ENCODE measurements at regions of chr1 and their contacts with region 1.

Region 1: DNA sequence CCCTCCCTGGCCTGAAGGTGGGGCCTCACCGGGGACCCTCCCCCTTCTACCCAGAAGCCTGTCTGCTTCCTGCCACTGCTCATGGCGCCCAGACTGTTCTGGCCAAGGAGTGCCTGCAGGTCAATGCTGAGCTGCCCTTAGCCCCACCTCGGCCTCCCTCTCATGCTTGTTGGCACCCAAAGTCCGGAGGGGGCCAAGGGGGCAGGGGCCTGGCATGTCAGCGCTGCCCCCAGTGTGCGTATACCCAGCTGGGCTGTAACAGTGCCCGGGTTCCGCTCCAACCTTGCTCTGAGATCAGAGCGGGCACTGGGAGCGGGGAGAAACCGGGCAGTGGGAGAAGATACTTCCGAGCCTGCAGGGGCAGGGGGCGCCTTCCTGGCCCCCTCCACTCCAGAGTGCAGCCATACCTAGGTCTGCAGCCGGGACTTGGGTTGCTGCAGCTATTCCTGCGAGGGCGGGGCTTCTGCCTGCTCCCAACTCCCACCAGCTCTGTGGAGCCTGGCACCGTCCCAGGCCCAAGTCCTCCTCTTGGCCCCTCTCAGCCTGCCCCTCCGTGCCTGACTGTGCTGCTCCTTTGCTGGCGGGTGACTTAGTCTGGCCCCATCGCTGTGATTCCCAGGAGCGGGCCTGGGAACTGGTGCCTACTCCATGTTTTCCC is 21.4 kb upstream of the TGFB2 start:
- DNase-seq: peak in 1 of 2 donors; percentile 46
- ATAC-seq: peak; percentile 21
- H3K4me3 ChIP-seq: no peak overlapping the region
- H3K27ac ChIP-seq: no peak overlapping the region
- H3K4me1 ChIP-seq: no peaks in the 10 kb centered on the region
- H3K27me3 ChIP-seq: no peaks in the 10 kb centered on the region

Region 2: GRCh38 chr1:218339267-218339831 is 15.7 kb after region 1 on chr1:
- intact Hi-C with region 1: no loop called
- DNase-seq: no peak
- ATAC-seq: no peak
- H3K4me3 ChIP-seq: no peak overlapping the region
- H3K27ac ChIP-seq: no peak overlapping the region
- H3K4me1 ChIP-seq: no peaks in the 10 kb centered on the region
- H3K27me3 ChIP-seq: no peaks in the 10 kb centered on the region

Region 3: GRCh38 chr1:218384581-218384993 is 60.9 kb after region 1 on chr1:
- intact Hi-C with region 1: no loop called
- DNase-seq: no peak
- ATAC-seq: no peak
- H3K4me3 ChIP-seq: no peak overlapping the region
- H3K27ac ChIP-seq: no peak overlapping the region
- H3K4me1 ChIP-seq: peaks cover 0 to 10% of the 10 kb centered on the region in 2 donors
- H3K27me3 ChIP-seq: no peaks in the 10 kb centered on the region

Region 4: DNA sequence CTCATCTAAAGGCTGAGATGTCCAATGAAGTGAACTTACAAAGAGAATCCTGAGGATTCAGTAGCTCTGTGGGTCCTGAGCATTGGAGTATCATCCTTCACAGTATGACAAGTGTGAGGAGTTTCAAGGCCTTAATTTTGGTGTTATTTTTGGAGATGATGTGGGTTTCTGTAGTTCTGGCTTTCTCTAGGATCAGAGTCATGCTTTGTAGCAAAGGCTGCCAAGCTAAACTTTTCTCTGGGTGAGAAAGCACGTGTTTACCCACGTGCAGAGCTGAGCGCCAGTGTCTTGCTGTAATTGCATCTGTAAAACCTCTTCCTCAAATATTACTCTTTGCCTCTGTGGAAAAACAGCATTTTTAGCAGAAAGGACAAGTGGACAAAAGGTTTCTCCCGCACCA is 462.2 kb after region 1 on chr1:
- intact Hi-C with region 1: no loop called
- DNase-seq: peak; percentile 56 to 72
- ATAC-seq: peak; percentile 68
- H3K4me3 ChIP-seq: no peak overlapping the region
- H3K27ac ChIP-seq: no peak overlapping the region
- H3K4me1 ChIP-seq: no peaks in the 10 kb centered on the region
- H3K27me3 ChIP-seq: no peaks in the 10 kb centered on the region

Region 5: DNA sequence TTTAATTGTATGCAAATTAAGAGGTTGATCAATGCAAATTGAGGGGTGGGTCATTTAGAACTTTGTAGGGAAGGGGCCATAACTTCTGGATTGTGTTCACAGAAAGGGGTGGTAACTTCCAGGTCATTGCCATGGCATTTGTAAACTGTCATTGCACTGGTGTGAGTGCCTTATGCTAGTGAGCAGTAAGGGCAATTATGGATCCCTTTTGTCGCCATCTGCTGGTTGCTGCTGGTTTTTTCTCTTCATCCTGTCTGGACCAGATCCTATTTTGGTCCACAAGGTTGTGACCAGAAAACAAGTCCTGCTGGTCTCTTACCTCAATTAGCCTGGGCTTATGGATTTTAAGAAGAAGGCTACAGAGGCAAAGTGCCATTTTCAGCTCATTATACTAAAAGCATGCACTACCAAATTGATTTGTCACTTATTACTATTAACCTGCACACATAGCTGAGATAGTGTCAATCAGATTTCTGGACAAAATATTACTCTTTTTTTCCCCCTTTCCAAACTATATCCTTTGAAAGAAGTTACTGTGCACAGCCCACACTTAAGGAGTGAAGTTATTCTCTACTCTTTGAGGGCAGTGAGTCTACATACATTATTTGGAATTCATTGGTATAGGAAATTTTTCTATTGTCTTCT is 1093.0 kb after region 1 on chr1:
- intact Hi-C with region 1: loop called in 1 of 2 experiments (anchors 10 kb)
- DNase-seq: peak in 1 of 2 donors; percentile 60
- ATAC-seq: peak; percentile 73
- H3K4me3 ChIP-seq: no peak overlapping the region
- H3K27ac ChIP-seq: no peak overlapping the region
- H3K4me1 ChIP-seq: no peaks in the 10 kb centered on the region
- H3K27me3 ChIP-seq: no peaks in the 10 kb centered on the region

Region 6: GRCh38 chr1:219576931-219577730 is 1253.4 kb after region 1 on chr1:
- intact Hi-C with region 1: loop called in 1 of 2 experiments (anchors 10 kb)
- DNase-seq: no peak
- ATAC-seq: no peak
- H3K4me3 ChIP-seq: no peak overlapping the region
- H3K27ac ChIP-seq: no peak overlapping the region
- H3K4me1 ChIP-seq: no peaks in the 10 kb centered on the region
- H3K27me3 ChIP-seq: no peaks in the 10 kb centered on the region

Region 7: GRCh38 chr1:219660666-219661463 is 1337.2 kb after region 1 on chr1:
- intact Hi-C with region 1: loop called in 1 of 2 experiments (anchors 10 kb)
- DNase-seq: peak; percentile 92 to 96
- ATAC-seq: peak; percentile 86
- H3K4me3 ChIP-seq: no peak overlapping the region
- H3K27ac ChIP-seq: no peak overlapping the region
- H3K4me1 ChIP-seq: no peaks in the 10 kb centered on the region
- H3K27me3 ChIP-seq: no peaks in the 10 kb centered on the region

Measured in aorta (tissue), 5 donors.